ENCODE measurements at regions of chr1 and their contacts with region 1.

Region 1: GRCh38 chr1:109630081-109630897 is 10.7 kb downstream of the AMPD2 start:
- DNase-seq: no peak
- H3K4me3 ChIP-seq: no peak overlapping the region
- H3K27ac ChIP-seq: no peak overlapping the region
- H3K4me1 ChIP-seq: peaks cover 21% of the 10 kb centered on the region
- H3K27me3 ChIP-seq: no peaks in the 10 kb centered on the region
- CTCF ChIP-seq: peak; percentile 51

Region 2: GRCh38 chr1:109548321-109549267 is 81.7 kb before region 1 on chr1 and contains the start of gene GNAI3:
- intact Hi-C with region 1: loop called (anchors 5 kb)
- DNase-seq: peak; percentile 96
- H3K4me3 ChIP-seq: peak within 1 kb of the TSS; percentile 91
- H3K27ac ChIP-seq: peak within 1 kb of the TSS; percentile 93
- H3K4me1 ChIP-seq: peaks cover 70% of the 10 kb centered on the region
- H3K27me3 ChIP-seq: no peaks in the 10 kb centered on the region
- CTCF ChIP-seq: no peak
- total RNA-seq, gene GNAI3: 2.0 TPM

Measured in left ventricle myocardium inferior (tissue), 1 donor.